Activated CD4-positive, alpha-beta T cell treated with anti-CD3 and anti-CD28 coated beads for 36 hours (primary cell): ENCODE measurements at regions of chr15 and their contacts with region 1.

Region 1: GRCh38 chr15:58951388-58952007 is 18.0 kb upstream of the SLTM start:
- DNase-seq: no peak
- ATAC-seq: no peak
- H3K4me3 Mint-ChIP-seq: no peak overlapping the region
- H3K27ac Mint-ChIP-seq: no peak overlapping the region
- H3K4me1 Mint-ChIP-seq: peaks cover 7% of the 10 kb centered on the region
- H3K27me3 Mint-ChIP-seq: no peaks in the 10 kb centered on the region

Region 2: DNA sequence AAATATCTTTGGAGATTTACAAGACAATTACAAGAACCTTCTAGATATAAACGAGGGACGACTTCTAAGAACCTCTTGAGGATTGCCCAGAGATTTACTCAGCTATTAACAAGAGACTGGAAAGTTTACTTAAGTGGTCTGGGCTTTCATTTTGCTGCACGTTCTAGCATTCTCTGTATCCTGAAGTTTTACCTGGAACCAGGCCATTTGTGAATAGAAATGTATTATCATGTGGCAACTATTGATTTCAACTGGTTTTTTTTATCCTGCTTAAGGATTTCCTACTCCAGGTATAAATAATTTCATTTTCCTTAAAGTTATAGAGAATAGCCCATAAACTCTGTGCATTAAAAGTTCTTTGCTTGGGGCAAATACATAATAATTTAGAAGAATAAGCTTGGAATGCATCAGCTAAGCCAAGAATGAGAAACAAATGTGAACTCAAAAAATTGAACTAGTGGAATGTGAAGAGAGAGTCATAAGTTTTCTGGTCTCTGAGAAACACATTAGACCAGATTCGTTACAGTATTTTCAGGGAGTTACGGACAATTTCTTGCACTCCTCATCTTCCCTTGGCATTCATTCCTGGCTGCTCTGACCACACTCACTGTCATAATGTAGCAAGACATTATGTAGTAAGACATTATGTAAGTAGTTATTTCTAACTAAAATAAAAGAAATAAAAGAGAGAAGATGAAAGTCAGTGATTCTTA is 812.1 kb before region 1 on chr15:
- CTCF ChIA-PET with region 1: no interaction called
- POLR2A ChIA-PET with region 1: no interaction called
- intact Hi-C with region 1: loop called in 1 of 2 experiments (anchors 5 kb)
- DNase-seq: no peak
- ATAC-seq: no peak
- H3K4me3 Mint-ChIP-seq: no peak overlapping the region
- H3K27ac Mint-ChIP-seq: no peak overlapping the region
- H3K4me1 Mint-ChIP-seq: no peaks in the 10 kb centered on the region
- H3K27me3 Mint-ChIP-seq: peaks cover 17% of the 10 kb centered on the region

Region 3: GRCh38 chr15:59313641-59314332 is 362.3 kb after region 1 on chr15:
- CTCF ChIA-PET with region 1: no interaction called
- POLR2A ChIA-PET with region 1: no interaction called
- intact Hi-C with region 1: no loop called
- DNase-seq: peak; percentile 7
- ATAC-seq: no peak
- H3K4me3 Mint-ChIP-seq: no peak overlapping the region
- H3K27ac Mint-ChIP-seq: no peak overlapping the region
- H3K4me1 Mint-ChIP-seq: no peaks in the 10 kb centered on the region
- H3K27me3 Mint-ChIP-seq: no peaks in the 10 kb centered on the region